CD8-positive, alpha-beta T cell (primary cell): ENCODE measurements at regions of chr1 and their contacts with region 1.

Region 1: GRCh38 chr1:145996433-145997015 is at the start of gene TXNIP:
- DNase-seq: peak; percentile 63 to 97 (median 93)
- ATAC-seq: peak; percentile 73
- H3K4me3 ChIP-seq: peak within 1 kb of the TSS; percentile 71 to 94
- H3K4me3 Mint-ChIP-seq: peak within 1 kb of the TSS; percentile 96
- H3K27ac ChIP-seq: peak within 1 kb of the TSS; percentile 93 to 98
- H3K27ac Mint-ChIP-seq: peak within 1 kb of the TSS; percentile 98
- H3K4me1 ChIP-seq: peaks cover 40% of the 10 kb centered on the region
- H3K4me1 Mint-ChIP-seq: peaks cover 58% of the 10 kb centered on the region
- H3K27me3 ChIP-seq: no peaks in the 10 kb centered on the region
- H3K27me3 Mint-ChIP-seq: no peaks in the 10 kb centered on the region
- CTCF ChIP-seq: no peak
- total RNA-seq, gene TXNIP: 627 to 652 TPM

Region 2: GRCh38 chr1:145706086-145706680 is 290.3 kb before region 1 on chr1:
- CTCF ChIA-PET with region 1: no interaction called
- POLR2A ChIA-PET with region 1: no interaction called
- intact Hi-C with region 1: no loop called
- DNase-seq: no peak
- ATAC-seq: no peak
- H3K4me3 ChIP-seq: no peak overlapping the region
- H3K4me3 Mint-ChIP-seq: no peak overlapping the region
- H3K27ac ChIP-seq: no peak overlapping the region
- H3K27ac Mint-ChIP-seq: no peak overlapping the region
- H3K4me1 ChIP-seq: no peaks in the 10 kb centered on the region
- H3K4me1 Mint-ChIP-seq: no peaks in the 10 kb centered on the region
- H3K27me3 ChIP-seq: no peaks in the 10 kb centered on the region
- H3K27me3 Mint-ChIP-seq: no peaks in the 10 kb centered on the region
- CTCF ChIP-seq: no peak

Region 3: DNA sequence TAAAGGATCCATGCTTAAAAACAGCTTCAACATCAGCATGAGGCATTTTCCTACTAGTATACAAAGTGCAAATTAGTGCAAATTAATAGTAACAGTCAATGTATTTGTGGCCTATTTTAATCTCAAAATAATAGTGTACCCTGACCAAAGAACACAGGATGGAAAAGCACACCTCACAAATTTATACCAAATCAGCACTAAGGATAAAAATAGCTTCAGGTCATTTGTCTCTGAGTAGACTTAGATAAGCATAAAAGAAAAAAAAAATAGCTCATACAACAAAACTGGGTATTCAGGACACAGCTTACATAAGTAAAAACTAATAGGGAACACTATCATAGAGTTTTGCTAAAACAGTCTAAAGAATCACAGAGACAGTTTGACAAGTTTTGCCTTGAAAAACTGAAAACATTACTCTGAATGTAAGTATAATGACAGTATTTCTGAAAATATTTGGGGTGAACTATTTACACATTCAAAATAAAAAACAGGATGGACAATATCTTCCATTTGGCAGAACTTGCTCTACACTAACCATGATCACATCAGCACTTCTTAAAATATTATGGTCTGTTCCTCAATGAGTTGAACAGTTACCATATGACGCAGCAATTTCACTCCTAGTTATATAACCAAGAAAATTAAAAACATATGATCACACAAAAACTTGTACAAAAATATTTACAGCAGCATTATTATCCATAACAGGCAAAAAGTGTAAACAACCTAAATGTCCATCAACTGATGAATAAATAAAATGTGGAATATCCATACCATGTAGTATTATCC is 219.0 kb before region 1 on chr1:
- CTCF ChIA-PET with region 1: no interaction called
- POLR2A ChIA-PET with region 1: no interaction called
- intact Hi-C with region 1: no loop called
- DNase-seq: no peak
- ATAC-seq: no peak
- H3K4me3 ChIP-seq: no peak overlapping the region
- H3K4me3 Mint-ChIP-seq: no peak overlapping the region
- H3K27ac ChIP-seq: no peak overlapping the region
- H3K27ac Mint-ChIP-seq: no peak overlapping the region
- H3K4me1 ChIP-seq: peaks cover 5% of the 10 kb centered on the region
- H3K4me1 Mint-ChIP-seq: peaks cover 10% of the 10 kb centered on the region
- H3K27me3 ChIP-seq: no peaks in the 10 kb centered on the region
- H3K27me3 Mint-ChIP-seq: no peaks in the 10 kb centered on the region
- CTCF ChIP-seq: no peak

Region 4: DNA sequence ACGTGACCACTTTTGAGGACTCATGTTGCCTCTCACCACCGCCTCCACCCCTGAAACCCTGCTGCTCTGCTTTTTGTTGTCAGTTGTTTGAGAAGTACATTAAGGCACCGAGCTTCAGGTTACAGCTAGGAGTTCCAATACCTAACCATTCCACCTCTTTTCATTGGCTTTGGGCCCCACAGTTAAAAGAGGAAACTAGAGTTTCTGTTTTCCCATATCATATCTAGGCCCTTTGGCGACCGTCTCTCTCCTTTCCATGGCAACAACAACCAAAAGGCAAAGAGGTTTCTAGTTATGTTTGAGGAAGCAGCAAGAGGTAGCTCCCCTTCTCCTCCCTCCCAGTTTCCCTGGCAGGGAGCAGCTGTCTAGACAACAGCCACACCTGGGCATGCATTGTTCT is 116.7 kb before region 1 on chr1:
- CTCF ChIA-PET with region 1: no interaction called
- POLR2A ChIA-PET with region 1: no interaction called
- intact Hi-C with region 1: no loop called
- DNase-seq: no peak
- ATAC-seq: no peak
- H3K4me3 ChIP-seq: no peak overlapping the region
- H3K4me3 Mint-ChIP-seq: no peak overlapping the region
- H3K27ac ChIP-seq: no peak overlapping the region
- H3K27ac Mint-ChIP-seq: no peak overlapping the region
- H3K4me1 ChIP-seq: no peaks in the 10 kb centered on the region
- H3K4me1 Mint-ChIP-seq: peaks cover 2% of the 10 kb centered on the region
- H3K27me3 ChIP-seq: peaks cover 0 to 3% of the 10 kb centered on the region in 2 experiments
- H3K27me3 Mint-ChIP-seq: peaks cover 17% of the 10 kb centered on the region
- CTCF ChIP-seq: no peak

Region 5: GRCh38 chr1:145927063-145927886 is 69.2 kb before region 1 on chr1 and contains the start of gene RBM8A:
- CTCF ChIA-PET with region 1: interaction called, 3 read pairs
- POLR2A ChIA-PET with region 1: interaction called, 16 read pairs
- intact Hi-C with region 1: loop called in 1 of 2 experiments (anchors 2 kb)
- DNase-seq: peak; percentile 85 to 99 (median 94)
- ATAC-seq: peak; percentile 96
- H3K4me3 ChIP-seq: peak within 1 kb of the TSS; percentile 86 to 91
- H3K4me3 Mint-ChIP-seq: no peak within 1 kb of the TSS
- H3K27ac ChIP-seq: peak within 1 kb of the TSS; percentile 89 to 95
- H3K27ac Mint-ChIP-seq: peak within 1 kb of the TSS; percentile 91
- H3K4me1 ChIP-seq: peaks cover 22% of the 10 kb centered on the region
- H3K4me1 Mint-ChIP-seq: peaks cover 20% of the 10 kb centered on the region
- H3K27me3 ChIP-seq: no peaks in the 10 kb centered on the region
- H3K27me3 Mint-ChIP-seq: no peaks in the 10 kb centered on the region
- CTCF ChIP-seq: peak; percentile 60
- total RNA-seq, gene RBM8A: 180 to 187 TPM

Region 6: GRCh38 chr1:145963995-145964901 is 32.3 kb before region 1 on chr1 and contains the starts of genes ANKRD34A and POLR3GL:
- CTCF ChIA-PET with region 1: interaction called, 3 read pairs
- POLR2A ChIA-PET with region 1: interaction called, 39 read pairs
- intact Hi-C with region 1: loop called in 1 of 2 experiments (anchors 1 kb)
- DNase-seq: peak; percentile 77 to 95 (median 91)
- ATAC-seq: peak; percentile 88
- H3K4me3 ChIP-seq: peak within 1 kb of the TSS; percentile 87 to 92
- H3K4me3 Mint-ChIP-seq: peak within 1 kb of the TSS; percentile 98
- H3K27ac ChIP-seq: peak within 1 kb of the TSS; percentile 71 to 78
- H3K27ac Mint-ChIP-seq: peak within 1 kb of the TSS; percentile 98
- H3K4me1 ChIP-seq: peaks cover 32% of the 10 kb centered on the region
- H3K4me1 Mint-ChIP-seq: peaks cover 58% of the 10 kb centered on the region
- H3K27me3 ChIP-seq: no peaks in the 10 kb centered on the region
- H3K27me3 Mint-ChIP-seq: no peaks in the 10 kb centered on the region
- CTCF ChIP-seq: no peak
- total RNA-seq, gene ANKRD34A: 0.42 to 0.62 TPM
- total RNA-seq, gene POLR3GL: 12.9 to 14.4 TPM

Region 7: DNA sequence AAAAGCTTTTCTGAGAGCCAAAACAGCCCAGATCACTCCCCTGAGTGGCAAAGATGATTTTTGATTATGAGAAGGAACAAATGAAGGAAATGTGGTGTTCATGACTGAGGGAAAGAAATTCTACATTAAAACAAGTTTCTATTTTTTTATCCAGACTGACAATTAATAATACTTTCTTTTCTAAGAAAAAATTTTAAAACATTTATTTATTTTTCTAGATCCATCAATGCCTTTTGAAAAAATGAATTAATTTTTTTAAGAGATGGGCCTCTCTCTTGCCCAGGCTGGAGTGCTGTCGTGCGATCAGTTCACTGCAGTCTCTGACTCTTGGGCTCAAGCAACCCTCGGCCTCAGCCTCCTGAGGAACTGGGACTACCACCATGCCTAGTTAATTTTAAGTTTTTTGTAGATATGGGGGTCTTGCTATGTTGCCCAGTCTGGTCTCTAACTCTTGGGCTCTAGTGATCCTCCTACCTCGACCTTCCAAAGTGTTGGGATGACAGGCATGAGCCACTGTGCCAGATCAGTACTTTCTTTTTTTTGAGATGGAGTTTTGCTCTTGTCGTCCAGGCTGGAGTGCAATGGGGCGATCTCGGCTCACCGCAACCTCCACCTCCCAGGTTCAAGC is 11.1 kb after region 1 on chr1:
- CTCF ChIA-PET with region 1: interaction called, 15 read pairs
- POLR2A ChIA-PET with region 1: interaction called, 41 read pairs
- intact Hi-C with region 1: loop called (anchors 1 kb)
- DNase-seq: peak in 1 of 9 experiments; percentile 39
- ATAC-seq: no peak
- H3K4me3 ChIP-seq: no peak overlapping the region
- H3K4me3 Mint-ChIP-seq: peak overlapping the region; percentile 82
- H3K27ac ChIP-seq: peak overlapping the region; percentile 46 to 59
- H3K27ac Mint-ChIP-seq: peak overlapping the region; percentile 92
- H3K4me1 ChIP-seq: peaks cover 27% of the 10 kb centered on the region
- H3K4me1 Mint-ChIP-seq: peaks cover 34% of the 10 kb centered on the region
- H3K27me3 ChIP-seq: no peaks in the 10 kb centered on the region
- H3K27me3 Mint-ChIP-seq: no peaks in the 10 kb centered on the region
- CTCF ChIP-seq: no peak

Region 8: DNA sequence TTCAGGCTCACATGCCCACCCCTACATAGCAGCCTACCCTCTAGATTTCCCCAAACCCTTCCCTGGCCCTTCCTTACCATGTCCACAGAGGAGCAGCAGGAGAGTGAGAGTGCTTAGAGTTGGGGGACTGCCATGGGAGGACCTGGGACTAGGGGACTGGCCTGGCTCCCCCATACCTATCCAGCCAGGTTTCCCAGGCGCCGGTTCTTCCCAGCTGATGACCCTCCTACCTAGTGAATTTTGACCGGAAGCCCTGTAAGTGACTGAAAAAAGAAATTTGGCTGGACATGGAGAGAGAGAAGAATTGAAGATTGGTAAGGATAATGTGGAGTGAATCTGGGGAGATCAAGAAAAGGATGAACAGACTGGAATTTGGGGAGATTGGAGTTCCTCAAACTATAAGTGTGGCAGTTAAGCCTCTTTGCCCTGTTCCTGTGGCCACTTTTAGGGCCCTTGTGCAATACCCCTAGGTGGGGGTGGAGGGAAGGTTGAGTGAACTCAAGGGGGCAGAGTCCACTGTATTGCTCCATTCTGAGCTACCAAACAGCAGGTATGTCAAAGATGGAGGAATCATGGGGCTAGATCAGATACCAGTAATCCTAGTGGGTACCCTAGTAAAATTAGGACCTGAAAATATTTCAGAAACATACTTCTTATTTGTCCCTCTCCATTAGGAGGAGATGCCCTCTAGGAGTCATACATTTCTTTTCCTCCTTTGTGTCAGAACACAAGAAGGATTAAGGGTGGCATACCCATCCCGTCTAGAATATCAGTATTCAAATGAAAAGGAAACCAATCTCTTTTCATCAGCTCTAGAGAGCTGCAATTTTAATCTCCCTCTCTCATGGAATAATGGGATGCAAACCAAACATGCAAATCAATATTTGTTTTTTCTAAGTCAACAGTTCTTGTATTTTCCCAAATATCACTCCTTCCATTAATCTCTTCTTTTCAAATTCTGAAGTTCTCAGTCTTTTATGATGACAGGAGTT is 23.8 kb after region 1 on chr1:
- CTCF ChIA-PET with region 1: no interaction called
- POLR2A ChIA-PET with region 1: no interaction called
- intact Hi-C with region 1: no loop called
- DNase-seq: peak in 1 of 9 experiments; percentile 19
- ATAC-seq: no peak
- H3K4me3 ChIP-seq: no peak overlapping the region
- H3K4me3 Mint-ChIP-seq: peak overlapping the region; percentile 13
- H3K27ac ChIP-seq: no peak overlapping the region
- H3K27ac Mint-ChIP-seq: peak overlapping the region; percentile 20
- H3K4me1 ChIP-seq: no peaks in the 10 kb centered on the region
- H3K4me1 Mint-ChIP-seq: peaks cover 9% of the 10 kb centered on the region
- H3K27me3 ChIP-seq: peaks cover 10 to 14% of the 10 kb centered on the region in 2 experiments
- H3K27me3 Mint-ChIP-seq: peaks cover 38% of the 10 kb centered on the region
- CTCF ChIP-seq: no peak